ENCODE measurements at regions of chr2 and their contacts with region 1.

Region 1: GRCh38 chr2:158006961-158007719 is 94.5 kb upstream of the UPP2 start:
- DNase-seq: peak in 1 of 3 donors; percentile 12
- H3K4me3 ChIP-seq: no peak overlapping the region
- H3K4me3 Mint-ChIP-seq: no peak overlapping the region
- H3K27ac ChIP-seq: no peak overlapping the region
- H3K27ac Mint-ChIP-seq: peak overlapping the region in 2 of 7 donors; percentile 16 to 43
- H3K4me1 ChIP-seq: peaks cover 8 to 10% of the 10 kb centered on the region in 2 donors
- H3K4me1 Mint-ChIP-seq: peaks cover 23% of the 10 kb centered on the region
- H3K27me3 ChIP-seq: no peaks in the 10 kb centered on the region
- H3K27me3 Mint-ChIP-seq: peaks cover 1 to 5% (median 2%) of the 10 kb centered on the region in 3 donors
- CTCF ChIP-seq: peak; percentile 30

Region 2: DNA sequence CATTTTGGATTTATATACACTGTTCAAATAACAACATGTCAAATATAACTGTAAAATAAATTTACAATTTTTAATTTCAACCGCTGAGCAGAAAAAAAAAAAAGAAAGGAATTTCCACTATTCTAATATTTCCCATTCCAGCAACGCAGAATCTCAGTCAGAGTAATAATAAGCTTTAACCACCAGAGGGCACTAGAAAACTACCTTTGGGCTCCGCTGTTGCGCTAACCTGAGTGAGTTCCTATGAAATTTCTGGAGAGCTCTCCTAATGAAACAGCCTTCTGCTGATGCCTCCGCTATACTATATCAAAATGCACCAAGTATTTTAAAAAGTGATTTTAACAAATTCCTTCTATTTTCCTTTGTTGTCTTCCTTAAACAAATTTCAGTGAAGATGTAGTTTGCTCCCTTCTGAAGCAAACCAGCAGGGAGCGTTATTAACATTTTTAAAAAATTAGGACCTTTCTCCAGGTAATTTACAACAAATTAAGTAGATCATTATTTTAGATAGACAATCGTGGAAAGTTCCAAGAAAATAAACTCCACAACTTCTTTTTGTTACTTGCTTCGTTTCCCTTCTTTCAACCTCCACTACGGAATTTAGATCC is 704.5 kb before region 1 on chr2:
- intact Hi-C with region 1: loop called (anchors 10 kb)
- DNase-seq: peak; percentile 33 to 71 (median 52)
- H3K4me3 ChIP-seq: no peak overlapping the region
- H3K4me3 Mint-ChIP-seq: no peak overlapping the region
- H3K27ac ChIP-seq: no peak overlapping the region
- H3K27ac Mint-ChIP-seq: no peak overlapping the region
- H3K4me1 ChIP-seq: peaks cover 0 to 12% of the 10 kb centered on the region in 2 donors
- H3K4me1 Mint-ChIP-seq: peaks cover 12% of the 10 kb centered on the region
- H3K27me3 ChIP-seq: peaks cover 0 to 4% of the 10 kb centered on the region in 2 donors
- H3K27me3 Mint-ChIP-seq: peaks cover 0 to 4% (median 1%) of the 10 kb centered on the region in 3 donors
- CTCF ChIP-seq: peak; percentile 90

Region 3: DNA sequence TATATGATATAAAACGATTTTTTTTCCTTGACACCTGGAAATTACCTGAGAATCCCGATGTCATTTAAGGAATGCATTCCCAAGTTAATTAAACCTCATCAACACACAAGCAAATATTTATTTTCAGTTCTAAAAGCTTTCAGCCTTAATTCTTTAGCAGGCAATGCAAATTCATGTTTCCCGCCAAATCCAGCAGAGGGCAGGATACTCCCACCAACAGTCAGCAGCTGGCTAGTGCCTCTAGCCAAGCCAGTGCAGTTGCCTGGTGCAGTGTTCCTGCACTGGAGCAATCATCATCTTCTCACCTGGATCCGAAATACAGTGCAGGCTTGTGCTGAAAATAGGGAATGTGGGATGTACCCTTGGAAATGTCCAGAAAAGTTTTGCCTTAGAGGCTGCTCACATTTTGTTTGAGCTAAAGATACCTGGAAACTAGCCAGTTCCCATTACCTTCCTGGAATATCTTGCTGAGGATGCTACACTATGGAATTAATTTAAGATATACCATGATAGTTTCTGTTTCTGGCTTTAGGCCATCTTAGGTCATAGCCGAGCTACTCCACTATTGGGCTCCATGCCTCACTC is 514.9 kb before region 1 on chr2:
- intact Hi-C with region 1: loop called (anchors 5 to 10 kb)
- DNase-seq: peak; percentile 51 to 78 (median 65)
- H3K4me3 ChIP-seq: no peak overlapping the region
- H3K4me3 Mint-ChIP-seq: no peak overlapping the region
- H3K27ac ChIP-seq: no peak overlapping the region
- H3K27ac Mint-ChIP-seq: peak overlapping the region in 1 of 7 donors; percentile 27
- H3K4me1 ChIP-seq: peaks cover 8 to 10% of the 10 kb centered on the region in 2 donors
- H3K4me1 Mint-ChIP-seq: peaks cover 10% of the 10 kb centered on the region
- H3K27me3 ChIP-seq: no peaks in the 10 kb centered on the region
- H3K27me3 Mint-ChIP-seq: no peaks in the 10 kb centered on the region
- CTCF ChIP-seq: peak; percentile 86

Region 4: GRCh38 chr2:157497638-157498314 is 509.4 kb before region 1 on chr2:
- intact Hi-C with region 1: loop called (anchors 5 to 10 kb)
- DNase-seq: peak in 2 of 3 donors; percentile 55 to 62
- H3K4me3 ChIP-seq: no peak overlapping the region
- H3K4me3 Mint-ChIP-seq: no peak overlapping the region
- H3K27ac ChIP-seq: no peak overlapping the region
- H3K27ac Mint-ChIP-seq: no peak overlapping the region
- H3K4me1 ChIP-seq: peaks cover 5 to 15% of the 10 kb centered on the region in 2 donors
- H3K4me1 Mint-ChIP-seq: peaks cover 21% of the 10 kb centered on the region
- H3K27me3 ChIP-seq: no peaks in the 10 kb centered on the region
- H3K27me3 Mint-ChIP-seq: peaks cover 0 to 1% (median 0%) of the 10 kb centered on the region in 3 donors
- CTCF ChIP-seq: peak; percentile 83

Region 5: DNA sequence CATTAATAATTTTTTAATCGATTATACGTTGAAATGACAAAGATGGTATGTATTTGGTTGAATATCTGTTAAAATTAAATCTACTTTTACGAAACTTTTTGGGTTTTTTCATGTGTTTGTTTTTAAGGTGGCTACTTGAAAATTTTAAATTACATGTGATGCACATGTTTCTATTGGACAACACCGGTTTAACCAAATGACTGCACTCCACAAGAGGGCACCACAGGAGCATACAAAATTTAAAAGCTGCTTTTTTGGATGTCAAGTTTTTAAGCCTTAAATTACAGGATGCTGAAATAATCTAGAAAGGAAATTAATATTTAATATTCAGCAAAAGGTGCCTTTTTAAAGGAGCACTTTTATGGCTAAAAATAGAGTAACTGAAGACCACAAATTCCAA is 229.7 kb before region 1 on chr2:
- intact Hi-C with region 1: loop called in 1 of 2 experiments (anchors 5 kb)
- DNase-seq: peak in 2 of 3 donors; percentile 2 to 5
- H3K4me3 ChIP-seq: no peak overlapping the region
- H3K4me3 Mint-ChIP-seq: no peak overlapping the region
- H3K27ac ChIP-seq: no peak overlapping the region
- H3K27ac Mint-ChIP-seq: no peak overlapping the region
- H3K4me1 ChIP-seq: no peaks in the 10 kb centered on the region
- H3K4me1 Mint-ChIP-seq: peaks cover 4% of the 10 kb centered on the region
- H3K27me3 ChIP-seq: no peaks in the 10 kb centered on the region
- H3K27me3 Mint-ChIP-seq: no peaks in the 10 kb centered on the region
- CTCF ChIP-seq: peak; percentile 55

Measured in CD14-positive monocyte (primary cell).